Activated naive CD4-positive, alpha-beta T cell treated with anti-CD3 and anti-CD28 coated beads for 36 hours (primary cell): ENCODE measurements at regions of chr15 and their contacts with region 1.

Region 1: GRCh38 chr15:90594301-90594701 is 64.6 kb downstream of the CRTC3 start:
- DNase-seq: peak; percentile 97
- H3K4me3 Mint-ChIP-seq: peak overlapping the region; percentile 77
- H3K27ac Mint-ChIP-seq: peak overlapping the region; percentile 99
- H3K4me1 Mint-ChIP-seq: peaks cover 77% of the 10 kb centered on the region
- H3K27me3 Mint-ChIP-seq: no peaks in the 10 kb centered on the region

Region 2: DNA sequence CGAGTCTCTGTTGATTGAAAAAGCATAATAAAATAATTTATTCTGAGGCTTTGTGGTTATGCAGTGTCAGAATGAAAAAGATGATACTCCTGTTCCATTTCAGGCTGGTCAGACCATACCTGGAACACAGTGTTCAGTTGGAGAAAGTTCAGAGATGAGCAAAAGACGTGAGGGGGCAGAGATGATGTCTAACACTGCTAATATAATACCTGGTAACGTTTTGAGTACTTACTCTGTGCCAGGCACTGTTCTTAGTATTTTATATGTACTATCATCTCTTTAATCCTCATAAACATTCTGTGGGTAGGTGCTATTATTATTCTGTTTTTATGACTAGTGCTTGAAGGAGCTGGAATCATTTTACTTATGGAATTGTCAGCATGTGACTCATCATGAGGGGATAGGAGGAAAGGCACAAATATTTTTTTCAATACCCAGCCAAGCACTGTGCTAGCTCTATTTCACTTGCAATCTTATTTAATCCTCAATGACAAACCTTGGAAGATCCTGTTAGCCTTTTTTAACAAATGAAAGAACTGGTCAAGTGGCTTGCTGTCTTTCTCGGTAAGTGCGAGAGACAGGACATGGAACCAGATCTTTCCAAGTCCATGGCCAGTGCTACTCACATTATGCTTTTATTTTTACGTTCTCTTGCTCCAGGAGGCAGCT is 174.4 kb before region 1 on chr15:
- CTCF ChIA-PET with region 1: no interaction called
- intact Hi-C with region 1: loop called (anchors 2 kb)
- DNase-seq: peak; percentile 73
- H3K4me3 Mint-ChIP-seq: peak overlapping the region; percentile 33
- H3K27ac Mint-ChIP-seq: peak overlapping the region; percentile 87
- H3K4me1 Mint-ChIP-seq: peaks cover 77% of the 10 kb centered on the region
- H3K27me3 Mint-ChIP-seq: no peaks in the 10 kb centered on the region

Region 3: GRCh38 chr15:90539789-90540188 is 54.5 kb before region 1 on chr15:
- CTCF ChIA-PET with region 1: no interaction called
- intact Hi-C with region 1: loop called (anchors 1 kb)
- DNase-seq: peak; percentile 79
- H3K4me3 Mint-ChIP-seq: peak overlapping the region; percentile 68
- H3K27ac Mint-ChIP-seq: peak overlapping the region; percentile 97
- H3K4me1 Mint-ChIP-seq: peaks cover 81% of the 10 kb centered on the region
- H3K27me3 Mint-ChIP-seq: no peaks in the 10 kb centered on the region

Region 4: DNA sequence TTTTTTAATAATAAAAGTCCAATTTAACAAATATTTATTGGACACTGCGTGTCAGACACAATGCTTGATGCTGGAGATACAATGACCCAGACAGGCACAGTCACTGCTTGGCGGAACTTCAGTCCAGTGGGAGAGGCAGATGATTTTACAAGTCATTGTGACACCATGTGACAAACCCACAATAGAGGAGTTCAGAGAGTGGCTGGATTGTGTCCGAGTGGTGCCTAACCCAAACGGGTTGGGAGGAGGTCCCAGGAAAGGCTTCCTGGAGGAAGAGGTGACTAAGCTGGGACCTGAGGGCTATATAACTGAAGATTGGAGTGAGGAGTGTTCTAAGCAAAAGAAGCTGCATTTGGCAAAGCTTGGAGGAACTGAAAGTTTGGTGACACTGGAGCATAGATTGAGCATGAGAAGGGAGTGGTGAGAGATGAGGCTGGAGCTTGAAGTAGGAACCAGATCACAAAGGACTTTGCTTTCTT is 23.2 kb before region 1 on chr15:
- CTCF ChIA-PET with region 1: interaction called, 4 read pairs
- intact Hi-C with region 1: loop called (anchors 1 kb)
- DNase-seq: no peak
- H3K4me3 Mint-ChIP-seq: no peak overlapping the region
- H3K27ac Mint-ChIP-seq: peak overlapping the region; percentile 69
- H3K4me1 Mint-ChIP-seq: peaks cover 85% of the 10 kb centered on the region
- H3K27me3 Mint-ChIP-seq: no peaks in the 10 kb centered on the region